ENCODE measurements at regions of chr15 and their contacts with region 1.

Region 1: GRCh38 chr15:41989259-41989933 is 17.0 kb upstream of the EHD4 start:
- DNase-seq: peak; percentile 69
- H3K4me3 Mint-ChIP-seq: no peak overlapping the region
- H3K27ac Mint-ChIP-seq: no peak overlapping the region
- H3K4me1 Mint-ChIP-seq: no peaks in the 10 kb centered on the region
- H3K27me3 Mint-ChIP-seq: no peaks in the 10 kb centered on the region

Region 2: DNA sequence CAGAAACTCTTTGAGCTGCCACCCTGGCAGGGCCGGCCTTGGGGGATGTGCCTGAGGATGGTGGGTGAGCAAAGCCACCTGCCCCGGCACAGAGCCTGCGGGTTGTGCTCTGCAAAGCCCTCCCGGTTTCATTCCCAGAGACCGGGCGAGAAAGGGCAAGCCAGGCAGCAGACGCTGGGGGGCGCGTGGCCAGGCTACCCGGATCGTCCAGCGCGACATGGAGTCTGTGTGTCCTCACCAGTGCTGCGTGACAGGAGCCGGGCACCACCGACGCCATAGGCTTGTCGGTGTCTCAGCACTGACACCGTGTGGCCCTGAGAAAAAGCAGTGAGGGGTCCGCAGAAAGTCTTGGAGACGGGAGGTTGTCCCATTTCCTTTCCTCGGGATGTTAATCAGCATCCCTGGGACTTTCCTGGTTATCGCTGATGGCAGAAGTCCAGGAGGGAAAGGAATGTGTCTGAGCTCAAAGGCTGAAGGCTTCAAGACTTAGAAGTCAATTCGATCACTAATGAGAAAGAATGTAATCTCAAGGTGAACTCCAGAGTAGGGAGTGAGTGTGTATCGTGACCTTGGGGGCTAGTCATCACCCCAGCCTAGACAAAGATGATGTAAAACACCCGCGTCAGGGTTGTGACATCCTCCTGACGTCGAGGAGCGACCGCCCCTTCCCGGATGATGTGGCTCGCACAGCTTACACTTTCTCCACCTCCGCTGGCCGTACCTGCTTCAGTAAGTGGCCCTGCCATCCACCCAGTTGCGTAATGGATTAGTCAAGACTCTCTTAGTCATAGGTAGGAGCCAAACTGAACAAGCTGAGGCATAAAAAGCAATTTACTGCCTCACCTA is 67.8 kb after region 1 on chr15:
- intact Hi-C with region 1: loop called (anchors 1 kb)
- DNase-seq: peak; percentile 17
- H3K4me3 Mint-ChIP-seq: peak overlapping the region; percentile 53
- H3K27ac Mint-ChIP-seq: no peak overlapping the region
- H3K4me1 Mint-ChIP-seq: peaks cover 8% of the 10 kb centered on the region
- H3K27me3 Mint-ChIP-seq: peaks cover 42% of the 10 kb centered on the region

Region 3: DNA sequence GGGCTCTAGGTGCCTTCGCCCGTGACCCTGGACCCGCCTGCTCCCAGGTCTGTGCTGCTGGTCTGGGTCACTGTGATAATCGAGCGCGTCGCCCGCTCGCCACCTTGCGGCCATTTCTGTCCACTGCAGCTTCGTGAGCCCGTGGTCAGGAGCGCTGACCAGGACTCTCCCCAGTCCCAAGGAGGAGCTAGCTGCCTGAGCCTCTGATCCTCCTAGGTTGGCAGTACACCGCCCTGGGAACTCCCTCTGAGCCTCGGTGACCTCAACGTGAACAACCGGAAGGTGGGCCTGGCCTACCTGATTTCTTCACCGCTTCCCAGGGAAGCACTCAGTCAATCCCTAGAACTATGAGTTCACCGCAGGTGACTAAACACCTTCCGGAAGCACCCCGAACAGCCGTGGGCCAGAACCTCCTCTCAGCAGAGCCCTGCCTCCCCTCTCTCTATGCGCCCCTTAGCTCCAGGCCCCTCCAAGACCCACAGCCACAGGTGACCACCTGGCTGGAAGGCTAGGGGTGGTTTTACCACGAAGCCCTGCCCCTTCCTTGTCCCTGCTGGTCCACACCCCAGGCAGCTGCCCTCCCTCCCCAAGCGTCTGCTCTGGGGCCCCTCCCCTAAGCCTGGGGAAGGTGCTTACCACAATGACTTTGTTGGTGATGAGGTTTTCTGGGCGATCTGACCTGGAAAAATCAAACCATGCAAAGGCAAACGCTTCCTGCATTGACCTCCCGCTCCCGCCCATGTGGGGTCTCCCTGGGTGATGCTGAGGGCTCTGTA is 95.3 kb after region 1 on chr15:
- intact Hi-C with region 1: loop called (anchors 1 kb)
- DNase-seq: peak; percentile 24
- H3K4me3 Mint-ChIP-seq: no peak overlapping the region
- H3K27ac Mint-ChIP-seq: no peak overlapping the region
- H3K4me1 Mint-ChIP-seq: peaks cover 2% of the 10 kb centered on the region
- H3K27me3 Mint-ChIP-seq: peaks cover 9% of the 10 kb centered on the region

Region 4: DNA sequence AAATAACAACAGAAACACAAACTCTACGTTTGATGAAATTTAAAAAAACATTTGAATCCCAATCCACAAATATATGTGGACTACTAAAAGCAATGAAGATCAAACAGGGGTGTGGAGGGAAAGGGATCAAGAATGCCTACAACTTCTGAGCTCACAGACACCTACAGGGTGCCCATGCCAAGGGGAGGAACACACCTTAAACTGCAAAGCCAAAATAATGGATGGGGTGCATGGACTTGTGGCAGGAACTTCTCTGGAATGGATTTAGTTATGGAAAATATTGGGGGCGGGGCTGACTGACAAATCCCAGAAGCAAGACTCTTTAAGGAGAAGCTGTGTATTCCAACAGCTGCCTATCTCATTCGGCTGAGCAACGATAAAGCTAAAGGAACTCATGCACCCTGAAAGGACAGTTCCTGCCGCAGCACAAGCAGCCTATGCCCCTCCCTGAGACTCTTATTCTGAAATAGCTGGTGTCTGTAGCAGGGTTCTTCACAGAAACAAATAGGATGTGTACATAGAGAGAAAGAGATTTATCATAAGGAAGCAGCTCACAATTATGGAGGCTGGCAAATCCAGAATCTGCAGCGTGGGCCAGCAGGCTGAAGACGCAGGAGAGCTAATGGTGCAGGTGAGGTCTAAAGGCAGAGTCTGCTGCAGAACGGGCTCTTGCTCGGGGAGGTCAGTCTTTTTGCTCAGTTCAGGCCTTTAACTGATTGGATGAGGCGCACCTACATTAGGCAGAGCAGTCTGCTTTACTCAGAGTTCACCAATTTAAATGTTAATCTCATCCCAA is 129.5 kb after region 1 on chr15:
- intact Hi-C with region 1: no loop called
- DNase-seq: no peak
- H3K4me3 Mint-ChIP-seq: no peak overlapping the region
- H3K27ac Mint-ChIP-seq: no peak overlapping the region
- H3K4me1 Mint-ChIP-seq: peaks cover 8% of the 10 kb centered on the region
- H3K27me3 Mint-ChIP-seq: peaks cover 17% of the 10 kb centered on the region

Region 5: GRCh38 chr15:42137431-42138261 is 148.2 kb after region 1 on chr15:
- intact Hi-C with region 1: loop called (anchors 1 kb)
- DNase-seq: no peak
- H3K4me3 Mint-ChIP-seq: no peak overlapping the region
- H3K27ac Mint-ChIP-seq: no peak overlapping the region
- H3K4me1 Mint-ChIP-seq: no peaks in the 10 kb centered on the region
- H3K27me3 Mint-ChIP-seq: peaks cover 4% of the 10 kb centered on the region